OCI-LY7 (cell line): ENCODE measurements at regions of chr10 and their contacts with region 1.

Region 1: DNA sequence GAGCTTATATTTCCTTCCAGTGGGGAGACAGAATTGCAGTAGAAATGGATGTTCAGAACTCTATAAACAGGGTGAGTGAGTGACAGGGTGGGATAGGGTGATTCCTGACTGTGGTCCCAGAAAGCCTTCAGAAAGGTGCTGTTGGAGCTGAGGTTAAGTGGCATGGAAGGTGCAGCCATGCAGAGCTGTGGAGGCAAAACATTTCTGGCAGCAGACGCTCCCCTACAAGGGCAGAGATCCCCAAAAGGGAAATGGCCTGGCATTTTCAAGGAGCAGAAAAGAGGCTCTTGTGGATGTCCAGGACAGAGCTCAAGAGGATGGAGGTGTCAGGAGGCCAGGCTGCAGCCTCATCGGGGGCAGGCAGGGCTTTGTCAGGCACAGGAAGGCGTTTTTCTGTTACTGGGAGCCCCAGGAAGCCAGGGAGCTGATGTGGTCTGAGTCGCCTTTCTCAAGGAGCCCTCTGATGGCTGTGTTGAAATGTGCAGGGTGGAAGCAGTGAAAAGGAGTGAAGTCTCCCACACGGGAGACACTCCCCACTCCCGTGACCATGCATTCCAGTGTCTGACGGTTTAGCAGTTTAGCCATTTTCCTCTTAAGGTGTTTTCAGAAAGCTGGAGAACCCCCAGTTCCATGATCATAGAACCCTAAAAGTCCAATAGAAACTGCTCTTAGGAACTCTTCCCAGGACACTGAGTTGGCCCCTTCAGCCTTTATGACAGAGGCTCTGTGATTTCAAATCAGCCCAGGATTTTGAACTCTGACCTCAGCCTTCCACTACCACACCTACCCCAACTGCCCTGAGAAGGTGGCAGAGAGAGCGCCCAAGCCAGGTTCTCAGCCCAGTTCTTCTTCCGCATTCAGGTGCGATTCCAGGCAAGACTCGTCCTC is 96.2 kb downstream of the C10orf105 start:
- DNase-seq: peak; percentile 75
- H3K4me3 ChIP-seq: no peak overlapping the region
- H3K27ac ChIP-seq: peak overlapping the region; percentile 84
- H3K4me1 ChIP-seq: peaks cover 83% of the 10 kb centered on the region
- CTCF ChIP-seq: peak; percentile 74

Region 2: GRCh38 chr10:70337201-70337651 is 1286.1 kb before region 1 on chr10:
- CTCF ChIA-PET with region 1: no interaction called
- POLR2A ChIA-PET with region 1: no interaction called
- intact Hi-C with region 1: no loop called
- DNase-seq: no peak
- H3K4me3 ChIP-seq: no peak overlapping the region
- H3K27ac ChIP-seq: no peak overlapping the region
- H3K4me1 ChIP-seq: peaks cover 25% of the 10 kb centered on the region
- CTCF ChIP-seq: no peak

Region 3: DNA sequence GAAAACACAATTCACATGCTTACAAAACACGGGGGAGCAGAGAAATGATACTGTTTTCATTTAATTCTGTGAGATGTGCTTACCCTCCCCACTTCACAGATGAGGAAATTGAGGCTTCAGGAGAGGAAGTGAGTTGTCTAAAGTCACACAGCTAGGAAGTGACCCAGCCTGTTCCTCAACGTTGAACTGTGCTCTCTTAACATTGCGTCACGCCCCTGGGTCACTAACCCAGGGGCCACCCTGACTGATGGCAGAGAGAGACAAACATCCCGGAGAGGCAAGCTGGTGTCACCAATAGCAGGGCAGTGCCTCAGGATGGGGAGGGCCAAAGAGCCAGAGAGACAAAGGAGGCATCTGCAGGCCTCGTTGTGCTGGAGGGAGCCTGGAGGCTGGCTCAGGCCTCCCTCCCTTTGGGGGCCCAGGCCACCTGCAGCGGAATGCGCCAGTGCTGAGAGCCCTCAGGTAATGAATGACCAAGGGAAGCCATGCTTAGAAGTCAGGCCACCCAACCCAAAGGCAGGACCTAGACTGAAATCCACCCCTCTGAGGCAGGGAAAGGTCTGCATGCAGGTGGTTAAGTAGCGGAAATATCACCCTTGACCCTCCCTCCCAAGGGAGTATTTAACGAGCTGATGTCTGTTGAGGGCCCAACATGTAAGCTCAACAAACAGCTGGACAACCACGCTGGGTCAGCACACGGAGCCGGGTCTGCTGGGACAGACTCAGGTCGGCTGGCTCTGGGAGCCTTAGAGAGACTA is 14.9 kb after region 1 on chr10:
- CTCF ChIA-PET with region 1: interaction called, 19 read pairs
- POLR2A ChIA-PET with region 1: interaction called, 8 read pairs
- intact Hi-C with region 1: no loop called
- DNase-seq: peak; percentile 89
- H3K4me3 ChIP-seq: peak overlapping the region; percentile 10
- H3K27ac ChIP-seq: peak overlapping the region; percentile 59
- H3K4me1 ChIP-seq: peaks cover 48% of the 10 kb centered on the region
- CTCF ChIP-seq: no peak

Region 4: GRCh38 chr10:71771821-71772617 is 148.7 kb after region 1 on chr10:
- CTCF ChIA-PET with region 1: no interaction called
- POLR2A ChIA-PET with region 1: no interaction called
- intact Hi-C with region 1: no loop called
- DNase-seq: no peak
- H3K4me3 ChIP-seq: no peak overlapping the region
- H3K27ac ChIP-seq: no peak overlapping the region
- H3K4me1 ChIP-seq: peaks cover 68% of the 10 kb centered on the region
- CTCF ChIP-seq: no peak